ENCODE measurements at regions of chr6 and their contacts with region 1.

Region 1: DNA sequence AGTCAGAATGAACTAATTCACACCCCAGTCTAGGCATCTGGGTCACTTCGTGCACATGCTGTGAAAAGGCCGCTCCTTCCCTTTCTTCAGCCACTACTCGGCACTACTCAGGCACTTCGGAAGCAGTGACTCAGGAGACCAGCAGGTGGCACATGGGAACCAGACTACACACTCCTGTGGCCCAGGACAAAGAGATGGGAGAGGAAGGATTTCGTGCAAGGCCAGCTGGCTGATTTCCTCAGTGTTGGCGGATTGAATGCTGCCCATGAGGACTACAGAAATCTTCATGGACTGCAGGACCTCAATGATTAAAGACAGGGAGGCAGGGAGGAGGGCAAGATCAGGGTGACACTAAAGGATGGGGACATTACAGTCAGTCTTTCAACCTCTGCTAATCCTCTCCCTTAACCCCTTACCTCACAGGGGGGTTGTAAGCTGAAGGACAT is 117.8 kb upstream of the SPACA1 start:
- DNase-seq: peak; percentile 86
- H3K4me3 ChIP-seq: no peak overlapping the region
- H3K27ac ChIP-seq: no peak overlapping the region
- H3K4me1 ChIP-seq: no peaks in the 10 kb centered on the region
- H3K27me3 ChIP-seq: no peaks in the 10 kb centered on the region
- CTCF ChIP-seq: peak; percentile 91

Region 2: GRCh38 chr6:88238065-88238464 is 308.2 kb after region 1 on chr6:
- CTCF ChIA-PET with region 1: no interaction called
- POLR2A ChIA-PET with region 1: no interaction called
- intact Hi-C with region 1: loop called (anchors 5 kb)
- DNase-seq: peak; percentile 9
- H3K4me3 ChIP-seq: no peak overlapping the region
- H3K27ac ChIP-seq: no peak overlapping the region
- H3K4me1 ChIP-seq: no peaks in the 10 kb centered on the region
- H3K27me3 ChIP-seq: no peaks in the 10 kb centered on the region
- CTCF ChIP-seq: peak; percentile 45

Region 3: DNA sequence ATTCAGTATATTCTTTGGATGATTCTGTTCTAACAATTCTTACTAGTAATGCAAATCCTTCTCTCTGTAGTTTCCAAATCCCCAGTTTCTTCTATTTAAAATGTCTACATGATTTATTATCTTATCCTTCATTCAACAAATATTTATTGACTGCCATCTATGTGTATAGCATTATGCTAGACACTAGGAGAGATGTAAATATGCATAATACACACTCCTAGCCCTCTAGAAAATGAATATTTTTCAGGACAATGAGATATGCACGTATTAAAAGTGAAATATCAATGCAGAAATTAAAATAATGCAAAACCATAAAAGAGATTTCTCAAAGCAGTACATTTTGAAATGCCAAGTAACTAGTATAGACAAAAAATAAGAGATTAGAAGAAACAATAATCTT is 529.8 kb after region 1 on chr6:
- CTCF ChIA-PET with region 1: no interaction called
- POLR2A ChIA-PET with region 1: no interaction called
- intact Hi-C with region 1: loop called (anchors 10 kb)
- DNase-seq: no peak
- H3K4me3 ChIP-seq: no peak overlapping the region
- H3K27ac ChIP-seq: no peak overlapping the region
- H3K4me1 ChIP-seq: no peaks in the 10 kb centered on the region
- H3K27me3 ChIP-seq: peaks cover 30% of the 10 kb centered on the region
- CTCF ChIP-seq: no peak

Region 4: DNA sequence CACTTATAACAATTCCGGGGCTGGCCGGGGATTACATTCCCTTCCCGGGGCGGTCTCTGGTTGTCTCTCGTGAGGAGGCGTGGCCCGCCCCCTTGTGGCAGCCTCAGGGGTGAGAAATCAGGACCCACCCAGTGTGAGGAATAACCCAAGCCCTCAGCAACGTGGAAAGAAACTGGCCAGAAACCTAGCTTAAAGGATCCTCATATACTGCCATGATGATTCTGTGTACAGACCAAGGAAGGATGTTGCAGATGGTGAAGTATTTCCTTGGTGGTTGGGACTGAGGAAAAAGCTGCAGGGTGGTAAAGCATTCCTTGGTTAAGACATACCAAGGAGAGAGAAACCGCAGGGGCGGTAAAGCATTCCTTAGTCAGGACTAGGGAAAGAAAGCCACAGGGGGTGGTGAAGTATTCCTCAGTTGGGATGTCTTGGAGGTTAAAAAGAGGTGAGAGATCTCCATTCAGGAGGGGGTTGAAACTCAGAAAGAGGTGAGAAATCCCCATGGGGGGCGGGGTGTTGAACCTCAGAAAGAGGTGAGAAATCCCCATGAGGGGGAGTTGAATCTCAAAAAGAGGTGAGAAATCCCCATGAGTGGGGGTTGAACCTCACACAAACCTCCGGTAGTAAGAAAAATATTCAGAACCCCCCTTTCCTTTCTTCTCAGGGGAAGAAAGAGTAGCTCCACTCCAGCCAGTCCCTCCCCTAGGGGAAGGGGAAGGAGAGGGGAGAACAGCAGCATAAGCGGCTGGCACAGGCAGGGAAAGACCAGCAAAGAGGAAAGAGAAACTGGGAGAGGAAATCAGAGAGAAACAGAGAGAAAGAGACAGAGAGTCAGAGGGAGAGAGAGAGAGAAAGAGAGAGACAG is 795.5 kb after region 1 on chr6:
- CTCF ChIA-PET with region 1: no interaction called
- POLR2A ChIA-PET with region 1: no interaction called
- intact Hi-C with region 1: loop called (anchors 10 kb)
- DNase-seq: peak; percentile 77
- H3K4me3 ChIP-seq: no peak overlapping the region
- H3K27ac ChIP-seq: no peak overlapping the region
- H3K4me1 ChIP-seq: no peaks in the 10 kb centered on the region
- H3K27me3 ChIP-seq: no peaks in the 10 kb centered on the region
- CTCF ChIP-seq: peak; percentile 76

Region 5: GRCh38 chr6:88780714-88781389 is 851.0 kb after region 1 on chr6:
- CTCF ChIA-PET with region 1: no interaction called
- POLR2A ChIA-PET with region 1: no interaction called
- intact Hi-C with region 1: loop called (anchors 1 kb)
- DNase-seq: peak; percentile 87
- H3K4me3 ChIP-seq: no peak overlapping the region
- H3K27ac ChIP-seq: no peak overlapping the region
- H3K4me1 ChIP-seq: no peaks in the 10 kb centered on the region
- H3K27me3 ChIP-seq: no peaks in the 10 kb centered on the region
- CTCF ChIP-seq: peak; percentile 87

Region 6: DNA sequence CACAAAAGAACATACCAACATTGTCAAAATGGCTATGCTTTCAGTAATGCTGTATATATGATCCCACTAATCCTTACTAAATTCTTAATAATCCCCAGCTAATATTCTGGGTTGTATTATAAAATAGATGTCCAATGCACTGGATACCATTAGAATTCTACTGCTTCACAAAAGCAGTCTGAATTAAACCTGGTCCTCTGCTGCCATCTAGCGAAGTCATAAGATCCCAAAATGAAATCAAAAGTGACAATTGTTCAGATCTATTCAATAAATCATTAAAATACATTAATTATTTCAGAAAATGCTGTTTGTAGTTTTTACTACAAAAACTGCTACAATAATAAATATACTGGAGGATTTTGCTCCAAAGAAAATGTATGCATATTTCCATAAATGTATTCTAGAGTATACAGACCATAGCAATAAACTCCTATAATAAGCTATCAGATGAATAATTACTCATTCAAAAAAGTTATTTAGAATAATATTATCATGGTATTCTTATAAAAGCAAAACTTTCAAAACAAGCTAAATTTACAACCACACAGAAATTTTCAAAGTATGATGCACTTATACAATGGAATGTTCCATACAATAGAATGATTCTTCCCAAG is 941.0 kb after region 1 on chr6:
- CTCF ChIA-PET with region 1: no interaction called
- POLR2A ChIA-PET with region 1: no interaction called
- intact Hi-C with region 1: loop called (anchors 2 kb)
- DNase-seq: peak; percentile 70
- H3K4me3 ChIP-seq: no peak overlapping the region
- H3K27ac ChIP-seq: no peak overlapping the region
- H3K4me1 ChIP-seq: no peaks in the 10 kb centered on the region
- H3K27me3 ChIP-seq: no peaks in the 10 kb centered on the region
- CTCF ChIP-seq: peak; percentile 77

Measured in A673 (cell line).